GM13976 (cell line): ENCODE measurements at regions of chr3 and their contacts with region 1.

Region 1: GRCh38 chr3:62665598-62666437 is 209.4 kb downstream of the CADPS start:
- DNase-seq: peak; percentile 11
- CTCF ChIP-seq: peak; percentile 57

Region 2: DNA sequence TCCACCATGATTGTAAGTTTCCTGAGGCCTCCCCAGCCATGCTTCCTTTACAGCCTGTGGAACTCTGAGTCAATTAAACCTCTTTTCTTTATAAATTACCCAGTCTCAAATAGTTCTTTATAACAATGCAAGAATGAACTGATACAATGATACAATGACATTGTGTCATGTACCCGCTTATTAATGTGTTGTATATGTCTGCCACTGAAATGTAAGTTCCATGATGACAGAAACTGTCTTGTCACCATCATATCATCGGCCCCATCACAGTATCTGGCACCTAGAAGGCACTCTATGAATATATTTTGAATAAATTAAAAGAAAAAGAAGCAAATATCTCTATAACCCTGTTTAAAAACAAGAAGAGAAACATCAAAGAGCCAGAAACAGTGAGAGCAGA is 322.1 kb before region 1 on chr3:
- in situ Hi-C with region 1: no loop called
- DNase-seq: no peak
- CTCF ChIP-seq: no peak

Region 3: DNA sequence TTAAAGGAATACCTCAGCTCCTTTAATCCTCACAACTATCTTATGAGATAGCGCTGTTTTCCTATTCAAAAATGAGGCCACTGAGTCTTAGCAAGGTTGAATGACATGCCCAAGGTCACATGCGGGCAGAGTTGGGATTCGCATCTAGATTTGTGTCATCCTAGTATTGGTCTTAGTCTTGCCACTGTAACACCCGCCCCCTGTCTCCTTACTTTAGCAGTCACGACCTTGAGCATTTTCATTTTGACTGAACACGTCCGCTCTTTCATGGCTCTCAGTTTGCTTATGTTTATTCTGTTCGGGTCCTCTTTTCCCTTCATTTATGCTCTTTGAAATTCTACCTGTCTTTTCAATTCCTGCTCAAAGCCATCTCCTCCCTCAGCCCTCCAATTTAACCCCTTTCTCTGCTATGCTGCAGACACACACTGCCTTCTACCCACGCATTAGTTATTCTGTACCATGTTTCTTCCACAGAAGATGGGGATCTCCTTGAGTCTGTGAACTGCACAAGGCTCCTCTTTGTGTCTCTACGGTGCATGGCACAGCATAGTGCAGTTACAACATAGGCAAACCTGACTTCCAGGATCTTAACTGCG is 322.0 kb after region 1 on chr3:
- in situ Hi-C with region 1: no loop called
- DNase-seq: no peak
- CTCF ChIP-seq: no peak

Region 4: DNA sequence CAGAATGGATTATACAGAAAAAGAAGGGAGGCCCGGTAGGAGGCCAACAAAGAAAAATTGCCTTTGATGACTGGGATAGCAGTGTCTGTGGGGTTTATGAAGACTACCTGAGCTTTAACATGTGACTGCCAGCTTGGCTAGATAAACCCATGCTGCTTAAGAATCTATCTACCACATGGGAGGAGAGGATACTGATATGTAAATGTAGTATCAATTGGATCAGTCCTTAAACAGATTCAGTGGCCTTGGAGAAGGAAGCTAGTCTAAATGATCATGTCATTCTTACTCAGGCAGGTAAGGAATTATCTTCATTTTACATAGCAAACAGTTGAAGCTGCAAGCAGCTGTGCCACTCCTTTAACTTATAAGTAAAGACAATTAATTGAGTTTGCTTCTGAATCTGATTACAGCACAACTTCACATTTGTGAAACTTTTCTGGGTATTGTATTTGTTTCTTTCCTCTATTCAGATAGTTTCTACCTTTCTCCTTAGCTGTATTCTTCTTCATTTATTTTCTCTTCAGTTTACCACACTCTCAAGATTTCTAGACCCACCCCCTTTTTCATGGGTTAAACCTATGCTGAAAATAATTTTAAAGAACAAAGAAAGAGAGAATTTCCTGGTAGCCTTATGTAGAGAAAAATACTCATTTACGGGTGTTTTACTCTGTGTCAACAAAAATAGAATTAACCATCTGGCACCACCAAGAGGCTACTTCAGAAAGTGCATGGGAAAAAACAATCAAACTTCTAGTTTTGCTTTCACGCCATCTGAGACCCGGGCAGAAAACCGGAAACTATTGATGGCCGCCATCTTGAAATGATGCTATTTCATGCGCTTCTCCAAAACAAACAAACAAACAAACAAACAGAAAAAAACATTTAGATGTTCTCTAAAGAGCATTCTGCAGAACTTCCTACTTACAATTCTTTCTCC is 562.5 kb after region 1 on chr3:
- in situ Hi-C with region 1: loop called (anchors 25 kb)
- DNase-seq: no peak
- CTCF ChIP-seq: no peak